Activated B cell treated with CpG ODN at 0.5 μM for 24 hours (primary cell): ENCODE measurements at regions of chrX and their contacts with region 1.

Region 1: DNA sequence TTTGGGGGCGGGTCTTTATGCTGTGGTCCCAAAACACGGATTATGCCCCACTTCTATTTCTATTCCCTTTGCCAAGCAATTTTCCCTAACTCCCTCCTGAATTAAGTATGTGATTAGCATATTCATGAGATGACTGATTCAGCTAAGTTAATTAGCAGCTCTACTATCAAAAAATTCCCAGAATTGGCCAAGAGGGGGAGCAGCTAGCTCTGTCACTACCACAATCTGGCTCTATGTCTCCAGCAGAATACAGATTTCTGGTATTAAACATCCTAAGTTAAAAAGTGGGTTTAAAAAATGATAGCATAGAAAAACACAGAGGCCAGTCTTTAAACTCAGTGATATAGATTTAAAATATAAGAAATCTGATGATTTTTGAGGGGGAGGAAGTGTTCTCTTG is 80.3 kb downstream of the GPC4 start:
- DNase-seq: no peak
- ATAC-seq: no peak
- H3K4me3 Mint-ChIP-seq: no peak overlapping the region
- H3K27ac Mint-ChIP-seq: no peak overlapping the region
- H3K4me1 Mint-ChIP-seq: no peaks in the 10 kb centered on the region
- H3K27me3 Mint-ChIP-seq: no peaks in the 10 kb centered on the region
- CTCF ChIP-seq: no peak

Region 2: DNA sequence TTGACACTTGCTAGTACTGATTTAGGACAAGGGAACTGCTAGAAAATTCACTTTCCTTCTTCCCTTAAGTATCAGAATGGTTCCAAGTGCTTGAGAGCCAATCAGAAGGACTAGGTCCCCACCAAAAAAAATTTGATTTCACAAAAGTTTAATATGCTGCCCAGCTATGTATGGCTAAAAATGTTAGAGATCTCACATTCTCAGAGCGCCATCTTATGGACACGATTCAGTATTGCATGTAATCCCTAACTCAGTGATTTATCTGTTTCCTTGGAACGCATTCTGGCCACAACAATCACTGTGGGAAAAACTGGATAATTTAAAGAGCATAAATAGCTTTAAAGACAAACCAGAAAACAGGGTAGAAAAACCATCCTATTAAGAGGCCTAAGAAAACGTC is 335.4 kb after region 1 on chrX:
- CTCF ChIA-PET with region 1: interaction called, 14 read pairs
- POLR2A ChIA-PET with region 1: no interaction called
- intact Hi-C with region 1: loop called (anchors 2 kb)
- DNase-seq: no peak
- ATAC-seq: no peak
- H3K4me3 Mint-ChIP-seq: no peak overlapping the region
- H3K27ac Mint-ChIP-seq: no peak overlapping the region
- H3K4me1 Mint-ChIP-seq: no peaks in the 10 kb centered on the region
- H3K27me3 Mint-ChIP-seq: no peaks in the 10 kb centered on the region
- CTCF ChIP-seq: no peak